Activated CD4-positive, alpha-beta memory T cell treated with anti-CD3 and anti-CD28 coated beads, Interleukin-2, amount 10 ng/mL, durations not matched to agents 7 days and 5 days (primary cell): ENCODE measurements at regions of chr1 and their contacts with region 1.

Region 1: GRCh38 chr1:161201828-161202725 is at the start of gene NDUFS2:
- DNase-seq: peak; percentile 97
- H3K4me3 Mint-ChIP-seq: peak within 1 kb of the TSS; percentile 92
- H3K27ac Mint-ChIP-seq: peak within 1 kb of the TSS; percentile 96
- H3K4me1 Mint-ChIP-seq: peaks cover 81% of the 10 kb centered on the region
- H3K27me3 Mint-ChIP-seq: no peaks in the 10 kb centered on the region
- total RNA-seq, gene NDUFS2: 83.0 to 87.3 TPM

Region 2: DNA sequence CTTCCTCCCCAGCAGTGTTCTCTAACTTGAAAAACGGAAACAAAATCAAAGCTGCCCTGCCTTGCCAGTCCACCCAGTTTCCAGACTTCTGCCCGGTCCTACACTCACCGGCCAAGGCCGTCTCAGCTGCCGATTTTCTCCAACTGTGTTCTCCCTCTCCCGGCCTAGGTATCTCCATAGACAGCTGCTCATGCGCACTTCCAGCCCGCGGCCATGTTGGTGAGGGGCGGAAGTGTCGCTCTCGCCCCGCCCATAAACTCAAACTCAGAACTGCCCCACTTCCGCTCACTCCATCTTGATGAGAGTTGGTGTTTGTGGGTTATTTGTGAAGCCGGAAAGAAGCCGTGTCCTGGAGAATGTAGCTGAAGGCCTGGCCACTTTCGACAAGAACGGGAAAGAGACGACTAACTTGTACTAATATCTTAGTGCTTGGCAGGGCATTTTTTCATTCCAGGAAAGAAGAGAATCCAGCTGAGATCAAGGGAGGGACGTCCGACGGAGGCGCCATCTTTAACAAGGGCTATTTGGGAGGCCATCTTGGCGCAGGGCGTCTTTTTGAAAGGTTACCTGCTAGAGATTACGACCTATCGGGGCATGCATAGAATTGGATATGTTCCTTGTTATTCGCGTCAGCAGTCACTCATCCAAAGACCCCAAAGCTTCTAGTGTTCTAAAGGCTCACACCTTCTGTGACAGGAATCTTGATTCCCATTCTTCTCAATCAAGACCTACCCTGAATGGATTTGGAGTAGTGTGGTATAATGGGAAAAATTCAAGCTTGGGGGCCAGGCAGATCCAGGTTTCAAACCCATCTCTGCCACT is 156.1 kb before region 1 on chr1 and contains the start of gene USF1:
- CTCF ChIA-PET with region 1: no interaction called
- POLR2A ChIA-PET with region 1: interaction called, 13 read pairs
- DNase-seq: peak; percentile 96
- H3K4me3 Mint-ChIP-seq: peak within 1 kb of the TSS; percentile 88
- H3K27ac Mint-ChIP-seq: peak within 1 kb of the TSS; percentile 97
- H3K4me1 Mint-ChIP-seq: peaks cover 58% of the 10 kb centered on the region
- H3K27me3 Mint-ChIP-seq: no peaks in the 10 kb centered on the region
- total RNA-seq, gene USF1: 67.4 to 68.0 TPM

Region 3: GRCh38 chr1:161165742-161166668 is 36.1 kb before region 1 on chr1 and contains the start of gene PPOX:
- CTCF ChIA-PET with region 1: interaction called, 25 read pairs
- POLR2A ChIA-PET with region 1: interaction called, 52 read pairs
- DNase-seq: peak; percentile 96
- H3K4me3 Mint-ChIP-seq: peak within 1 kb of the TSS; percentile 88
- H3K27ac Mint-ChIP-seq: peak within 1 kb of the TSS; percentile 94
- H3K4me1 Mint-ChIP-seq: peaks cover 49% of the 10 kb centered on the region
- H3K27me3 Mint-ChIP-seq: no peaks in the 10 kb centered on the region
- total RNA-seq, gene PPOX: 32.9 to 33.2 TPM

Region 4: DNA sequence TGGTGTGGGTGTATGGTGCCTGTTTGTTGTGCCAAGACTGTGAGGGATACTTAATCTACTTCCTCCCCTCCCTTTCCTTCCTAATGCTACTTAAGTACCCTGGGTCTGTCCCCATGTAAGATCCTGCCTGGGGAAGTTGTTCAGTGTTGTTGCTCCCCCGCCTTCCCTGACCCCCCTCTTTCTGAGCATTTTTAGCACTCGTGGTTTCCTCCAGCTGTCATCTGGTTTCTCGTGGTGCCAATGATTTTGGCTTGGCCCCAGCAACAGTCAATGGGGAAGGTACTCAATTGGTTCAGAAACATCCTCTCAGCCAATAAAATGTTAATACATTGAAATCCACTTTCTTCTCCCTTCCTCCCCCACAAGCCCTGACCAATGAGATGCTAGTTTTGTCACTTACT is 16.8 kb before region 1 on chr1:
- CTCF ChIA-PET with region 1: interaction called, 49 read pairs
- POLR2A ChIA-PET with region 1: interaction called, 91 read pairs
- DNase-seq: peak; percentile 88
- H3K4me3 Mint-ChIP-seq: peak overlapping the region; percentile 71
- H3K27ac Mint-ChIP-seq: peak overlapping the region; percentile 93
- H3K4me1 Mint-ChIP-seq: peaks cover 79% of the 10 kb centered on the region
- H3K27me3 Mint-ChIP-seq: no peaks in the 10 kb centered on the region

Region 5: GRCh38 chr1:161242313-161242712 is 40.2 kb after region 1 on chr1:
- CTCF ChIA-PET with region 1: no interaction called
- POLR2A ChIA-PET with region 1: no interaction called
- DNase-seq: no peak
- H3K4me3 Mint-ChIP-seq: no peak overlapping the region
- H3K27ac Mint-ChIP-seq: no peak overlapping the region
- H3K4me1 Mint-ChIP-seq: no peaks in the 10 kb centered on the region
- H3K27me3 Mint-ChIP-seq: peaks cover 16% of the 10 kb centered on the region

Region 6: DNA sequence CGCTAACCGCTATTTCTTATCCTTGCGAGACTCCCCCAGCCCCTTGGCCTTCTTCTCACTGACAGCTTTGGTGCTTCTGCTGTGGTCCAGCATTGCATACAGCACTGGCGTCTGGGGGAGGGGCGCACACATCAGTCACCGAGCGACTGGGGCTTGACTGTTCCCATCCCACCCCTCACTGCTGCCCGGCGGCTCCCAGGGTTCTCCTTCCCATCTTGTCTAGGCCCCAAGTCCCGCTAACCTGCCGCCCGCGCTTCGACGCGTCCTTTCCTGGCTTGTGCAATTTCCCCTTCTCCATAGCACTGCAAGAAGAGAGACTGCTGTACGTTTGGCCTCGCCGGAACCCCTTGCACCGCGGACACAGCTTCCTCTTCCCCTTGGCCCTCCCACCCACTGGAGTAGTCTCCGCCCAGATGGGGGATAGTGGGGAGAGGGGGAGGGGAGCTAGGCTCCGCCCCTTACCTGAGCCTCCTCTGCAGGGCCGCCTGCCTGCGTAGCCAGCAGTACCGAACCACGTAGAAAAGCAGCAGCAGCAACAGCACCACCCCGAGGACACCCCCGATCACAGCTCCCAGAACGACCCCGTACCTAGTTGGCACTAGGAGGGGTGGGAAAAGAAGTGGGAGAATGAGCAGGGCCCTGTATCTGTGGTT is 103.9 kb after region 1 on chr1:
- CTCF ChIA-PET with region 1: interaction called, 4 read pairs
- POLR2A ChIA-PET with region 1: interaction called, 10 read pairs
- DNase-seq: peak; percentile 89
- H3K4me3 Mint-ChIP-seq: peak overlapping the region; percentile 89
- H3K27ac Mint-ChIP-seq: peak overlapping the region; percentile 70
- H3K4me1 Mint-ChIP-seq: peaks cover 37% of the 10 kb centered on the region
- H3K27me3 Mint-ChIP-seq: peaks cover 3% of the 10 kb centered on the region

Region 7: DNA sequence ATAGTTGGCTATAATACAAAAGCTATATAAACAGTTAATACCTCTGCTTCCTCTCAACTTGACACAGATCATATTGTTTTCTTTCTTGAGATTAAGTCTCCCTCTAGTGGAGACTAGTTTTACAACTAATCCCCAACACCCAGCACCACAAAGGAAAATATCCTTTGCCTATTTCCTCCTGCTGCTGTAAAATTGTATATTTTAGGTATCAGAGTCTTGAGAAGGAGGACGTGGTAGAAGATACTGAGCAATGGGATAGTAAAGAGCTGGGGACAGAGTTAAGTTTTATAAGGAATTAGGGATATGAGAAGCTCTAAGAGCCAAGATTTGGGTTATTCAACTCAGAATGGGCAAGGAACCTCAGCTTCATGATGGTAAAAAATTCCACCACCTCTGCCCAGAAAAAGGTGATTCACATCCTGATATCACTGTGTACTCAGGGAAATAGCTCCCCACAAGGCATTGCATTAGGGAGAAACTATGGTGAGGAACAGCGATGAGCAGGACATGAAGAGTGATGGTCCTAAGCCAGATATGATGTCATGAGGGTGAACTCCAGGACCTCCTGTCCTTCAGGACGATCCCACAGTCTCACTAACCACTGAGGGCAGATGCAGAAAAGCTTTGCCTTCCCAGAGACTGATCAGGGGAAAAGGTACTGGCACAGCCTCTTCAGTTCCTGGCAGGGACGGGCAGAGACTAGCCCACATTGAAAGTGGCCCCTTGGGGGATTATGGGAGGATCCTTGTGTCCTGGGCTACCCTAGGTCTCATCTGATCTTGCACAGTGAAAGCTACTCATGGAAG is 180.3 kb after region 1 on chr1:
- CTCF ChIA-PET with region 1: interaction called, 15 read pairs
- POLR2A ChIA-PET with region 1: interaction called, 14 read pairs
- DNase-seq: no peak
- H3K4me3 Mint-ChIP-seq: no peak overlapping the region
- H3K27ac Mint-ChIP-seq: no peak overlapping the region
- H3K4me1 Mint-ChIP-seq: peaks cover 18% of the 10 kb centered on the region
- H3K27me3 Mint-ChIP-seq: no peaks in the 10 kb centered on the region